ENCODE measurements at regions of chr5 and their contacts with region 1.

Region 1: DNA sequence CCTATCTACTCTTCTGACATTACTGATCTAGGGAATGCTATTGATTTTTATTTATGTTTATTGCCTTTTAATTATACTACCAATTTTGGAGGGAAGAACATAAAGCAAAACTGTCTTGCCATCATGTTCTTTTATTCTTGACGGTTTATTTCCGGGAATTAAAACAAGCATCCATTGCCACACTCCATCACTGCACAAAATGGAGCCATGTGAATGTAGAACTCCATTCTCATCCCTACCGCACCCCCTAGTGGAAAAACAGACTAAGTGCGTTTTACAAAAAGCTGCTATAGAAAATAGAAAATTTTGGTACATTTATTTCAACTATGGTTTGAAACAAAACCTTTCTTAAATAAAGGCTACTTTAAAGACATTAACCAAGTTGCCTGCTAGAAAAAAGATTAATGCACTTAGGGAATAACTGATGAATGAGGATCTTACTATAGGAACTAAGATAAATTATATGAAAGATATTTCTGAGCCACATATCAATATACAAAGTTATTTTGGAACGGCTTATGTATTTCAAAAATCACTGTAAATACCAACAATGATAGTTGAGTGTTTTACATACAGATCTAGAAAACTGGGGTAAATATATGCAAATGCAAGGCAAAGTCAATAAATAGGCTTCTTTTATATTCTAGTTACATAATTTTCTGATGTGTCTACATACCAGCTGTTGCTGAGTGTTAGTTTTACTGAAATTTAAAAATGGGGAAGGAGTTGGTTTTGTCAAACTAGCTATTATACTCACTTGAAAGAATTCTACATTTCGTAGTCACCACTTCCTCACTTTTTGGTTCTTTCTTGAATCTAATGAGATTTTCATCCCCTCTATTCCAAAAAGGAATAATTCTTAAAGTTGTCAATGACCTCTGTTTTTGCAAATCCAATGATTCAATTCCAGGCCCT is 26.5 kb downstream of the OXCT1 start:
- DNase-seq: peak in 2 of 10 donors; percentile 9 to 30
- H3K4me3 ChIP-seq: peak overlapping the region in 4 of 59 donors; percentile 4 to 37 (median 20)
- H3K27ac ChIP-seq: peak overlapping the region in 16 of 59 donors; percentile 5 to 64 (median 36)
- H3K27me3 ChIP-seq: no peaks in the 10 kb centered on the region
- CTCF ChIP-seq: peak; percentile 52 to 90 (median 81)

Region 2: GRCh38 chr5:40904205-40904993 is 939.3 kb before region 1 on chr5:
- intact Hi-C with region 1: loop called in 1 of 2 experiments (anchors 5 kb)
- DNase-seq: peak in 7 of 10 donors; percentile 25 to 68 (median 44)
- H3K4me3 ChIP-seq: no peak overlapping the region
- H3K27ac ChIP-seq: peak overlapping the region in 13 of 59 donors; percentile 0 to 47 (median 27)
- H3K27me3 ChIP-seq: no peaks in the 10 kb centered on the region
- CTCF ChIP-seq: peak; percentile 41 to 87 (median 76)

Region 3: DNA sequence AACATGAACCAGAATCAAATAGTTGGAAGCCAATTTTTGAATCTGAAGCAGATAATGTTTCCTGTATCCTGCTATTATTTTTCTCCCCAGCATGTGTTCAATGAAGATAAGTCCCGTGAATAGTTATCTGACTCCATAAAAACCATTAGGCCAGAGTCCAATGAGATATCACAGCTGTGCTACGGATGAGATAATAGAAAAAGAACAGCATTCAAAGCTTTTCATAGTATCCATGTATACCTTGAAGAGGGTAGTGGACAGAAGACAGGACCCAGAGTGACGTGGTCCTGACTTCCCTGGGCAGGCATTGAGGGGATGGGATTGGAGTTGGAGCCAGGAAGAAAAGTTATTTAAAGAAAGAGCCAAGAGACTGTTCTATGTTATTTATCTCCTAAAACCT is 579.7 kb before region 1 on chr5:
- intact Hi-C with region 1: loop called (anchors 2 to 10 kb)
- DNase-seq: no peak
- H3K4me3 ChIP-seq: no peak overlapping the region
- H3K27ac ChIP-seq: no peak overlapping the region
- H3K27me3 ChIP-seq: peaks cover 0 to 3% (median 0%) of the 10 kb centered on the region in 45 donors
- CTCF ChIP-seq: no peak

Region 4: GRCh38 chr5:41629897-41630296 is 213.8 kb before region 1 on chr5:
- intact Hi-C with region 1: no loop called
- DNase-seq: no peak
- H3K4me3 ChIP-seq: no peak overlapping the region
- H3K27ac ChIP-seq: no peak overlapping the region
- H3K27me3 ChIP-seq: peaks cover 0 to 6% (median 0%) of the 10 kb centered on the region in 45 donors
- CTCF ChIP-seq: no peak

Measured in dorsolateral prefrontal cortex (tissue), 120 donors.